ENCODE measurements at regions of chr3 and their contacts with region 1.

Region 1: GRCh38 chr3:45154641-45155147 is 8.5 kb upstream of the CDCP1 start:
- DNase-seq: peak; percentile 95
- H3K4me3 ChIP-seq: no peak overlapping the region
- H3K27ac ChIP-seq: peak overlapping the region; percentile 50
- H3K4me1 ChIP-seq: peaks cover 23% of the 10 kb centered on the region
- H3K27me3 ChIP-seq: no peaks in the 10 kb centered on the region
- CTCF ChIP-seq: no peak

Region 2: DNA sequence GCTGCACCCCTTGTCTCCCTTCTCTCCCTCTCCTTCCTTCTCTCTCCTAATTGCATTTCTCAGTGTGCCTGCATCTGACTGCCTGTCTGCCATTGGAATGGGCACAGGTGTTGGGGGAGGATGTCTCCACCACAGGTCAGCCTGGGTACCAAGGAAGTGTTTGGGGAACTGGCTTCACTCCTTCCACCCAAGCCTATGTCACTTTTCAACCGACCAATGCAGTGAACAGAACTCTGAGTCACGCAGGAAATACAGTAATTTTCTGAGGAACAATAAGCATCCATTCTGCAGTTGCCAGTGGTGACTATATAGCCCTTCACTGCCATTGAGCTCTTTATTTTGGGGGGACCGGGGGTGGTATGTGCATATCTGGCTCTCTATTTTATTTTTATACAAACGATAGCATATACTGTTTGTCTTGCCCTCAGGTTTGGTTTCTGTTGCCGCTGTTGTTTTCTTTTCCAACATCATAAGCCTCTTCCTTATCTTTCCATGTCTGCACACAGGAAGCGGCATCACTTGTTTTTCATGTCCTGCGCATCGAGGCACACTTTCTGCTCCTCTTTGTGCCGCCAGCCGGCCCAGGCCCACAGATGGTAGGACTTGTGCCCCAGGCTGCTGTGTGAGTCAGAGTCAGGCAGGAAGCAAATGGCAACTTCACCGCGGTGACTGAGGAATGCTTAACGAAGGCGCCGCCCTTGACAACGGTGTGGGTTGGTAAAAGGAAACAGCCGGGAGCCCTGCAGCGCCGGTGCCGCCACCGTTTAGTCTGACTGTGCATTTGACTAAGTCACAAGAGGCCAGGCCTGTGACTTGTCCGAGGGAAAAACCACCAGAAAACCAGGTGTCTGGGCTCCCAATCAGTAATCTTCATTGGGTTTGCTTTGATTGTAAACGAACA is 12.6 kb after region 1 on chr3:
- CTCF ChIA-PET with region 1: interaction called, 4 read pairs
- dilution Hi-C with region 1: no loop called
- in situ Hi-C with region 1: no loop called
- intact Hi-C with region 1: loop called (anchors 1 kb)
- DNase-seq: peak; percentile 98
- H3K4me3 ChIP-seq: no peak overlapping the region
- H3K27ac ChIP-seq: peak overlapping the region; percentile 96
- H3K4me1 ChIP-seq: peaks cover 25% of the 10 kb centered on the region
- H3K27me3 ChIP-seq: no peaks in the 10 kb centered on the region
- CTCF ChIP-seq: no peak

Region 3: GRCh38 chr3:45182915-45183867 is 28.5 kb after region 1 on chr3:
- CTCF ChIA-PET with region 1: interaction called, 3 read pairs
- dilution Hi-C with region 1: no loop called
- in situ Hi-C with region 1: no loop called
- intact Hi-C with region 1: loop called (anchors 2 kb)
- DNase-seq: peak; percentile 95
- H3K4me3 ChIP-seq: no peak overlapping the region
- H3K27ac ChIP-seq: peak overlapping the region; percentile 61
- H3K4me1 ChIP-seq: peaks cover 40% of the 10 kb centered on the region
- H3K27me3 ChIP-seq: no peaks in the 10 kb centered on the region
- CTCF ChIP-seq: no peak

Region 4: DNA sequence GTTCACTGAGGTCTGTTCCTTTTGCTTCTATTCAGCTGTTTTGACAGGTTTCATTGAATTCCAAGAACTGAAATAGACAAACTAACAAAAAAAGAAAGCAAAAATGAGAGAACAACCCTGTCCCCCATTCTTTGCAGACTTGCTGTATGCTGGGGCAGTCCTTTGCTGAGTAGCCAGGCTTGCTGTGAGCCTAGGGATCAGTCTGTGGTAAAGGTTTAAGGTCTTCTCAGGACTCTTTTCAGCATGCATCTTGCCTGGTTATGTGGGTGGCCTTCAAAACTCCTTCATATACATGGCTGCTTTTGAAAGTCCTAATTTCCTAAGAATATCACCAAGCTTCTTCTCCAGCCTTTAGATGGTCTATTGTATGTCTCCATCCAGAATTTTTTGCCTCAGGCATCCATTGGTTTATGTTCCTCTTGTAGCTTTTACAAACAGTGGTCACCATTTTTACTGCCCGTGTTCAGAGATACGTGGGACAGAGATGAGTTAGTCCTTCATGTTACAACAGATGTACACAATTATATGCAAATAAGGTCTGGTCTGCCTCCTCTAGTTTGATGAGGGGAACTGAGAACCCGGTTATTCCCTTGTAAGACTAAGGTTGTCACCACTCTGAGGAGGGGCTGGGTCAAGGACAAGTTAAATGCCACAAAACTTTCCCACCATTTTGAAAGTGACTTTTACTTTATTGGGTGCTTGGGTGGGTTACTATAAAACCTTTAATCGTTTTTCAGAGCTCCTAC is 575.9 kb after region 1 on chr3:
- CTCF ChIA-PET with region 1: no interaction called
- dilution Hi-C with region 1: no loop called
- in situ Hi-C with region 1: no loop called
- intact Hi-C with region 1: no loop called
- DNase-seq: no peak
- H3K4me3 ChIP-seq: no peak overlapping the region
- H3K27ac ChIP-seq: no peak overlapping the region
- H3K4me1 ChIP-seq: no peaks in the 10 kb centered on the region
- H3K27me3 ChIP-seq: no peaks in the 10 kb centered on the region
- CTCF ChIP-seq: no peak

Measured in mammary epithelial cell (primary cell).